ENCODE measurements at regions of chr17 and their contacts with region 1.

Region 1: DNA sequence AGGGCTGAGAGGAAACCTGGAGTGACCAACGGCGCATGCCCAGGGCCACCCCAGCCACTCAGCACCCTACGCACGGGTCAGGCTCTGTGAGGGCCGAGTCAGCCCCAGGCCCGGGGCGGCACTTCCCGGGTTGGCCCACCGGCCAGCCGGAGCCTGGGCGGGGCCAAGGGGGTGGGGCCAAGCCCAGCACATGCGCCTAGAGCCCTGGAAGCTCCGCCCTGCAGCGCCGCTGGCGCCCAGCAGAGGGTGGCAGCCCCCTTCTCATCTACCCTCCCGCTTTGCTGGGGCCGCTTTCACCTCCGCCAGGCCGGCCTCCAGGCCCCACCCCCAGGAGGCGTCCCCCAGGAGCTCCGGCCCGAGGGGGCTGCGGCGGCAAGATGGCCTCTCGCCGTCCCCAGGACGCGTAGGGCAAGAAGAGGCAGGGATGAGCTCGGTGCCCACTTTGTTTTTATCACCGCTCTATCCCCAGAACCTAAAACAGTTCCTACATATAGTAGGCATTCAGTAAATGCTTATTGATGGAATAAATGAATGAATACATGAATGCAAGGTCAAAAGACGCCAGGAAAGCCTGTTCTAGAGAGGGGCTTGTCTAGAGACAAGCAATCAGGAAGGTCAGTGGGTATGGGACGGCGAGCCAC is 31.3 kb downstream of the MYO18A start:
- DNase-seq: peak; percentile 98
- ATAC-seq: peak; percentile 92
- H3K4me3 Mint-ChIP-seq: peak overlapping the region; percentile 79
- H3K27ac Mint-ChIP-seq: peak overlapping the region; percentile 80
- H3K4me1 Mint-ChIP-seq: peaks cover 50% of the 10 kb centered on the region
- H3K27me3 Mint-ChIP-seq: no peaks in the 10 kb centered on the region

Region 2: GRCh38 chr17:29124117-29124924 is 24.6 kb before region 1 on chr17:
- POLR2A ChIA-PET with region 1: interaction called, 50 read pairs
- DNase-seq: no peak
- ATAC-seq: peak; percentile 94
- H3K4me3 Mint-ChIP-seq: no peak overlapping the region
- H3K27ac Mint-ChIP-seq: no peak overlapping the region
- H3K4me1 Mint-ChIP-seq: peaks cover 2% of the 10 kb centered on the region
- H3K27me3 Mint-ChIP-seq: no peaks in the 10 kb centered on the region

Region 3: GRCh38 chr17:29133146-29133713 is 15.7 kb before region 1 on chr17:
- POLR2A ChIA-PET with region 1: interaction called, 30 read pairs
- DNase-seq: no peak
- ATAC-seq: peak; percentile 24
- H3K4me3 Mint-ChIP-seq: no peak overlapping the region
- H3K27ac Mint-ChIP-seq: peak overlapping the region; percentile 50
- H3K4me1 Mint-ChIP-seq: peaks cover 29% of the 10 kb centered on the region
- H3K27me3 Mint-ChIP-seq: no peaks in the 10 kb centered on the region

Region 4: DNA sequence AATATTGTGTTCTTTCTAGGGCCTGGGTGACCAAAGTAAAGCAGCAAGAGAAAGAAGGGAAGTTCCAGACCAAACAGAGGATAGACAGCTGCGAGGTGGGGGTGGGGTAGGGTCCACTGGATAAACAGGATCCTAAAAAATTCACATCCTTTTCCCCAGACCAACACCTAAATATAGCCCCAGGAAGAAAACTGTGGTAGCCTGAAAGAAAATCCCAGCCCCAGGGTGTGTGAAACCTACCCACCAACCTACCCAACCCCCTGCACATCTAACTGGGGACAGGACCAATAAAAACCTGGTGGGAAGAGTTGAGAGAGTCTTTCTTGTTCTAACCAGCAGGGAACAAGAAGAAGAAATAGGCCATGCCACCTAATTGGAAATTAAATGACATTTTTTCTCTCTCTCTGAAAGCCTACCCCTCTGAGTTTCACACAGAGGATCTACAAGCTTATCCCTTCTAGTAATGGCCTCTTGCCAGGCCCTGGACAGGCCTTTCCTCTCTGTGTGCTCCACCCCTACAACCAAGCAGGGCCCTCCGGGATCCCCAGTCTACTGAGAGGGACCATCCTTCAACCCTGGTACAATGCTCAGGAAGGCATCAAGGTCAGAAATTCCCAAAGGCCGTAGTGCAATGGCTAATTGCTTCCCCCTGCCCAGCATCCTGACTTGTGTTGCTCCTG is 19.3 kb after region 1 on chr17:
- POLR2A ChIA-PET with region 1: no interaction called
- DNase-seq: no peak
- ATAC-seq: no peak
- H3K4me3 Mint-ChIP-seq: no peak overlapping the region
- H3K27ac Mint-ChIP-seq: no peak overlapping the region
- H3K4me1 Mint-ChIP-seq: peaks cover 2% of the 10 kb centered on the region
- H3K27me3 Mint-ChIP-seq: no peaks in the 10 kb centered on the region

Region 5: DNA sequence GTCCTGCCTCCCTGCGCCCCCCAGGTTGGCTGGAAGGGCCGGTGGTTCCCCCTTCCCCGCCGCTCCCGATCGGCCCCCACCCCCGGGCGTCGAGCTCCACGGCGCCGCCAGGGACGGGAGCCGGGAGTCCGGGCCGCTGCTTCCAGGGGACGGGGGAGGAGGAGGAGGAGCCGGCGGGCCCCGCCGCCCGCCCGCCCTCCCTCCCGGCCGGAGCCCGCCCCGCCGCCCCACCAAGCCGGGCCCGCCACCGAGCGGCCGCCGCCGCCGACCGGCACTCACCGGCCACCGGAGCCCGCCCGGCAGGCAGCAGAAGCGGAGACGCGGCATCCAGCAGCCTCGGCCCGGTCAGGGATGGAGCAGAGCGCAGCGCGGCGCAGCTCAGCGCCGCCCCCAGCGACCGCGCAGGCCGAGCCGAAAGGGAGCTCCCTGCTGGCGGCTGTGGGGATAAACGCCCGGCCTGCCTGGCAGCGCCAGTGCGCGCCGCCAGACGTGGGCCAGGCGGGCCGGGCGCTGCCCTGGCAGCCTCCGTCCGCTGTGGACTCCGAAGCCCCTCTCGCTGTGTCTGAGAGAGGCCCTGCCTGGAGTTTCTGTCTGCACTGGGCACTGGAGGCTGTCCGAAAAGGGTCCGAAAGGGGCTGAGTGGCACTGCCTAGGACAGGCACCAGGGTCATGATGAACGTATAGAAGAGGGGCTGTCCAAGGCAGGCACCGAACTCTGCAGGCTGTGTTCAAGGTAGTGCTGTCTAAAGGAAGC is 31.3 kb after region 1 on chr17 and contains the start of gene MYO18A:
- POLR2A ChIA-PET with region 1: interaction called, 41 read pairs
- DNase-seq: peak; percentile 90
- ATAC-seq: peak; percentile 93
- H3K4me3 Mint-ChIP-seq: peak within 1 kb of the TSS; percentile 49
- H3K27ac Mint-ChIP-seq: peak within 1 kb of the TSS; percentile 12
- H3K4me1 Mint-ChIP-seq: peaks cover 29% of the 10 kb centered on the region
- H3K27me3 Mint-ChIP-seq: peaks cover 12% of the 10 kb centered on the region
- total RNA-seq, gene MYO18A: 79.7 to 80.6 TPM

Region 6: GRCh38 chr17:29219378-29220047 is 70.6 kb after region 1 on chr17:
- POLR2A ChIA-PET with region 1: interaction called, 10 read pairs
- DNase-seq: peak; percentile 68
- ATAC-seq: peak; percentile 92
- H3K4me3 Mint-ChIP-seq: no peak overlapping the region
- H3K27ac Mint-ChIP-seq: no peak overlapping the region
- H3K4me1 Mint-ChIP-seq: peaks cover 8% of the 10 kb centered on the region
- H3K27me3 Mint-ChIP-seq: peaks cover 7% of the 10 kb centered on the region

Region 7: GRCh38 chr17:29252101-29252866 is 103.4 kb after region 1 on chr17:
- POLR2A ChIA-PET with region 1: no interaction called
- DNase-seq: no peak
- ATAC-seq: no peak
- H3K4me3 Mint-ChIP-seq: no peak overlapping the region
- H3K27ac Mint-ChIP-seq: no peak overlapping the region
- H3K4me1 Mint-ChIP-seq: peaks cover 5% of the 10 kb centered on the region
- H3K27me3 Mint-ChIP-seq: no peaks in the 10 kb centered on the region

Region 8: DNA sequence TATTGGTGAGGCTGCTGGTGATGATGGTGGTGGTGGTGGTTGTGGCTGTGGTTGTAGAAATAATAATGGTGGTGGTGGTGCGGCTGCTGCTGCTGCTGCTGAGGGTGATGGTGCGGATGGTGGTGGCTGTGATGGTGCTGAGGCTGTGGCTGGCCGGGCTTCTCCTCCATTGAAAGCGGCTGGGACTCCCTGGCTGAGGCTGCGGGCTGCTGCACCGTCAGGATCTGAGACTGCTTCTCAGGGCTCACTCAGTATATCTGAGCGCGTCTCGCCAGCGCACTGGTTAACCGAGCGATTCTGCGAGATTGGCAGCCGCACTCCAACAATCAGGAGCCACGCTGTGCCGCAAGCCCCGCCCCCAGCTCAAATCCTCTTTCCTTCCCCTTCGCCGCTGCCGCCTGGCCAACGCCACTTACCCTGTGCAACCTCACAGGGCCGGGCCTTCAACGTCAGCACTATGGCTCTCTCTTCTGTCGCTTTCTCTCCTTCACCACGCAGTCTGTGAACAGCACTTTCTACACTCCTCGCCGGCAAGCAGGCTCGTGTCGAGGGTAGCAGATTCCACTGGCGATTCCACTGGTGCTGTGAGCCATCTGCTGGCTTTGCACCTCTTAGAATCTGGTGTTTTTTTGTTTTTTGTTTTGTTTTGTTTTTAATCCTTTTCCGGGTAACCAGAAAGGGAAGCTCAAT is 145.1 kb after region 1 on chr17 and contains the start of gene NUFIP2:
- POLR2A ChIA-PET with region 1: interaction called, 14 read pairs
- DNase-seq: peak; percentile 96
- ATAC-seq: peak; percentile 89
- H3K4me3 Mint-ChIP-seq: peak within 1 kb of the TSS; percentile 99
- H3K27ac Mint-ChIP-seq: peak within 1 kb of the TSS; percentile 100
- H3K4me1 Mint-ChIP-seq: peaks cover 31% of the 10 kb centered on the region
- H3K27me3 Mint-ChIP-seq: peaks cover 3% of the 10 kb centered on the region
- total RNA-seq, gene NUFIP2: 64.7 to 68.4 TPM

Measured in activated naive CD8-positive, alpha-beta T cell treated with anti-CD3 and anti-CD28 coated beads, Interleukin-2, amount 10 ng/mL, durations not matched to agents 7 days and 5 days (primary cell).